ENCODE measurements at regions of chr4 and their contacts with region 1.

Region 1: DNA sequence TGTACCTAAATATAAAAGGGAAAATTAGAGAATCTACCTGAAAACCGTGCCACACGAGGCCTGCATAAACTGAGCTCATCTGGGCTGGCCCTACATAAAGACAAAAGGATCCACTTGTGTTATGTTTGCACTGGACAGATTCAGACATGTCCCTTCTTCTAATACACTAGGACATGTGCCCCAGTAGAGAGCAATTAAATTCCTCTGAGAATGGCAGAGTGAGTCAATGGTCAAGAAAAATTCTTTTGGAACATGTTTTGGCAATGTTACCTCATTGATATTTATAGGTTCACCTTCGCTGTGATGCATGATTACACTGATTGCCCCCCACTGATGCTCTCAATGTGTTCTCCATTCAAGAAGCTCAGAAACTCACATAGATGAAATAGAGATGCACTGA is 95.2 kb downstream of the MANBA start:
- DNase-seq: peak; percentile 55
- H3K4me3 Mint-ChIP-seq: no peak overlapping the region
- H3K27ac Mint-ChIP-seq: peak overlapping the region; percentile 89
- H3K4me1 Mint-ChIP-seq: peaks cover 19% of the 10 kb centered on the region
- H3K27me3 Mint-ChIP-seq: no peaks in the 10 kb centered on the region
- CTCF ChIP-seq: no peak

Region 2: GRCh38 chr4:101244349-101244748 is 1421.2 kb before region 1 on chr4:
- CTCF ChIA-PET with region 1: no interaction called
- POLR2A ChIA-PET with region 1: no interaction called
- intact Hi-C with region 1: no loop called
- DNase-seq: no peak
- H3K4me3 Mint-ChIP-seq: no peak overlapping the region
- H3K27ac Mint-ChIP-seq: no peak overlapping the region
- H3K4me1 Mint-ChIP-seq: peaks cover 14% of the 10 kb centered on the region
- H3K27me3 Mint-ChIP-seq: no peaks in the 10 kb centered on the region
- CTCF ChIP-seq: no peak

Region 3: GRCh38 chr4:102390438-102390837 is 275.1 kb before region 1 on chr4:
- CTCF ChIA-PET with region 1: no interaction called
- POLR2A ChIA-PET with region 1: no interaction called
- intact Hi-C with region 1: no loop called
- DNase-seq: peak; percentile 79
- H3K4me3 Mint-ChIP-seq: no peak overlapping the region
- H3K27ac Mint-ChIP-seq: peak overlapping the region; percentile 66
- H3K4me1 Mint-ChIP-seq: peaks cover 24% of the 10 kb centered on the region
- H3K27me3 Mint-ChIP-seq: no peaks in the 10 kb centered on the region
- CTCF ChIP-seq: peak; percentile 21

Region 4: GRCh38 chr4:102420569-102421221 is 244.8 kb before region 1 on chr4:
- CTCF ChIA-PET with region 1: no interaction called
- POLR2A ChIA-PET with region 1: no interaction called
- intact Hi-C with region 1: no loop called
- DNase-seq: peak; percentile 40
- H3K4me3 Mint-ChIP-seq: no peak overlapping the region
- H3K27ac Mint-ChIP-seq: peak overlapping the region; percentile 53
- H3K4me1 Mint-ChIP-seq: peaks cover 11% of the 10 kb centered on the region
- H3K27me3 Mint-ChIP-seq: no peaks in the 10 kb centered on the region
- CTCF ChIP-seq: peak; percentile 23

Region 5: GRCh38 chr4:102647117-102647516 is 18.4 kb before region 1 on chr4:
- CTCF ChIA-PET with region 1: interaction called, 3 read pairs
- POLR2A ChIA-PET with region 1: interaction called, 18 read pairs
- intact Hi-C with region 1: no loop called
- DNase-seq: no peak
- H3K4me3 Mint-ChIP-seq: no peak overlapping the region
- H3K27ac Mint-ChIP-seq: no peak overlapping the region
- H3K4me1 Mint-ChIP-seq: no peaks in the 10 kb centered on the region
- H3K27me3 Mint-ChIP-seq: no peaks in the 10 kb centered on the region
- CTCF ChIP-seq: no peak

Region 6: DNA sequence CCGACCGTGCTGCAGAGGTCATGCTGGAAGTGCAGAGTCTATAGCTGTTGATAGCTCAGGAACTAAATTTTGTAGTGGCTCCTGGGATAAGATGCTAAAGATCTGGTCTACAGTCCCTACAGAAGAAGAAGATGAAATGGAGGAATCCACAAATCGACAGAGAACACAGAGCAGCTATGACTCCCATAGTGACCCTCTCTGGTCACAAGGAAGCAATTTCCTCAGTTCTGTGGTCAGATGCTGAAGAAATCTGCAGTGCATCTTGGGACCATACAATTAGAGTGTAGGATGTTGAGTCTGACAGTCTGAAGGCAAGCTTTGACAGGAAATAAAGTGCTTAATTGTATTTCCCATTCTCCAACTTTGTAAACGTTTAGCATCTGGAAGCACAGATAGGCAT is 86.4 kb after region 1 on chr4:
- CTCF ChIA-PET with region 1: no interaction called
- POLR2A ChIA-PET with region 1: no interaction called
- intact Hi-C with region 1: no loop called
- DNase-seq: no peak
- H3K4me3 Mint-ChIP-seq: no peak overlapping the region
- H3K27ac Mint-ChIP-seq: no peak overlapping the region
- H3K4me1 Mint-ChIP-seq: no peaks in the 10 kb centered on the region
- H3K27me3 Mint-ChIP-seq: no peaks in the 10 kb centered on the region
- CTCF ChIP-seq: no peak

Region 7: GRCh38 chr4:102815981-102816380 is 150.5 kb after region 1 on chr4:
- CTCF ChIA-PET with region 1: no interaction called
- POLR2A ChIA-PET with region 1: interaction called, 19 read pairs
- intact Hi-C with region 1: no loop called
- DNase-seq: peak; percentile 51
- H3K4me3 Mint-ChIP-seq: no peak overlapping the region
- H3K27ac Mint-ChIP-seq: peak overlapping the region; percentile 29
- H3K4me1 Mint-ChIP-seq: peaks cover 57% of the 10 kb centered on the region
- H3K27me3 Mint-ChIP-seq: no peaks in the 10 kb centered on the region
- CTCF ChIP-seq: no peak

Measured in MCF 10A (cell line).